ENCODE measurements at regions of chr5 and their contacts with region 1.

Region 1: GRCh38 chr5:175354964-175355363 is 89.0 kb downstream of the DRD1 start:
- DNase-seq: no peak
- H3K4me3 ChIP-seq: no peak overlapping the region
- H3K27ac ChIP-seq: no peak overlapping the region
- H3K4me1 ChIP-seq: no peaks in the 10 kb centered on the region
- H3K27me3 ChIP-seq: no peaks in the 10 kb centered on the region
- CTCF ChIP-seq: no peak
- EP300 ChIP-seq: no peak
- POLR2A ChIP-seq: no peak

Region 2: GRCh38 chr5:175288048-175288621 is 66.8 kb before region 1 on chr5:
- in situ Hi-C with region 1: no loop called
- intact Hi-C with region 1: loop called (anchors 2 kb)
- DNase-seq: no peak
- H3K4me3 ChIP-seq: no peak overlapping the region
- H3K27ac ChIP-seq: no peak overlapping the region
- H3K4me1 ChIP-seq: no peaks in the 10 kb centered on the region
- H3K27me3 ChIP-seq: no peaks in the 10 kb centered on the region
- CTCF ChIP-seq: no peak
- EP300 ChIP-seq: no peak
- POLR2A ChIP-seq: no peak